ENCODE measurements at regions of chr11 and their contacts with region 1.

Region 1: GRCh38 chr11:93389737-93390136 is 59.2 kb downstream of the DEUP1 start:
- DNase-seq: no peak
- ATAC-seq: no peak

Region 2: DNA sequence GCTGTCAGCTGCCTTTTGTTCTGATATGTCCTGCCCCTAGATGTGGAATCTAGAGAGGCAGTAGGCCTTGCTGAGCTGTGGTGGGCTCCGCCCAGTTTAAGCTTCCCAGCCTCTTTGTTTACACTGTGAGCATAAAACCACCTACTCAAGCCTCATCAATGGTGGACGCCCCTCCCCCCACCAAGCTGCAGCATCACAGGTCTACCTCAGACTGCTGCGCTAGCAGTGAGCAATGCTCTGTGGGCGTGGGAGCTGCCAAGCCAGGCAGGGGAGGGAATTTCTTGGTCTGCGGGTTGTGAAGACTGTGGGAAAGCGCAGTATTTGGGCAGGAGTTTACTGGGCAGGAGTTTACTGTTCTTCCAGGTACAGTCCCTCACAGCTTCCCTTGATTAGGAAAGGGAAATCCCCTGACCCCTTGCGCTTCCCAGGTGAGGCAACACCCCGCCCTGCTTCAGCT is 54.9 kb after region 1 on chr11:
- intact Hi-C with region 1: loop called in 1 of 2 experiments (anchors 10 kb)
- DNase-seq: peak in 1 of 2 donors; percentile 34
- ATAC-seq: no peak

Region 3: GRCh38 chr11:93756748-93757147 is 367.0 kb after region 1 on chr11:
- intact Hi-C with region 1: no loop called
- DNase-seq: no peak
- ATAC-seq: no peak

Region 4: GRCh38 chr11:93939084-93939760 is 549.5 kb after region 1 on chr11:
- intact Hi-C with region 1: no loop called
- DNase-seq: no peak
- ATAC-seq: no peak